Posterior vena cava (tissue), 2 donors: ENCODE measurements at regions of chr16 and their contacts with region 1.

Region 1: DNA sequence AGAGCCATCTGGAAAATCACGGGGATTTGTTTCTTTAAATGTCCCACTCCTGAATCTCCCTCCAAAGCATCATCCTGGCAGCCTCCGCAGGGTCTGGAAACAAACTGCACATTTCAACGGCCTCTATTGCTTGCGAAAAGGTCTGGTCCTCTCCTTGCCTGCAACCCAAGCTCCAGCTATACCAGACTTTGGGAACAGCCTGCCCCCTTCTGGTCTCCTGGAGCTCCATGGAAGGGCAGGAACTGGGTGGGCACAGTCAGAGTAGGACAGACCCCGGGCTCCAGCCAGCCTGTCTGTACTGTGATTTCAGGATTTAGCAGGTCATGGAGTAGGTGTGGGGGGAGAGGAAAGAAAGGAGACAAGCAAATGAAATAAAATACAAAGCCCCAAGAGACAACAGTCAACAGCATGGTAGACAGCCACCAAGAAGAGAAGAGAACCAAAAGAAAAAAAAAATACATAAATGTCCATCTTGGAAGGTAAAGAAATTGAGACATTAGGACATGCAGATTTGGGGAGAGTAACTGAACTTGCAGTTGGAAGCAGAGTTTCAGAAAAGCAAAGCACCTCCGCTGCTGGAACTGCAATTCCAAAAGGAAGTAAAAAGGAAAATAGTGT is 2.7 kb downstream of the XYLT1 start:
- DNase-seq: peak; percentile 87

Region 2: DNA sequence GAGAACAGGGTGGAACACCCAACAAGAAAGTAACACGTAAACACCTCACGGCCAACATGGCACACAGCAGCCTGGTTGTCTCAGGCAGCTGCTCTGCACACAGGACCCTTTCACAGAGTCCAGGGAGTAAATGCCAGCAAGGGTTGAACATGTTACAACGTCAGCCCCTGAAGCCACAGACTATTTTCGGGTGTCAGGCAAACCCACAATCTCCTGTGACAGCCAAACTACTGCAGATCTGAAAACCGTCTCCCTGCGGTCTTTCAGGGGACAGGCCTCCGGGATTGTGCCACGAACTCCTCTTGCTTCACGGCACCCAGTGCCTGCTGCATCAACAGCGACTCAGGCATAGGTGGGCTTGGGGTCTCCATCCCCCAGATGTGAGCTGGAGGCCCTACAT is 125.0 kb before region 1 on chr16:
- intact Hi-C with region 1: loop called in 1 of 2 experiments (anchors 10 kb)
- DNase-seq: no peak

Region 3: DNA sequence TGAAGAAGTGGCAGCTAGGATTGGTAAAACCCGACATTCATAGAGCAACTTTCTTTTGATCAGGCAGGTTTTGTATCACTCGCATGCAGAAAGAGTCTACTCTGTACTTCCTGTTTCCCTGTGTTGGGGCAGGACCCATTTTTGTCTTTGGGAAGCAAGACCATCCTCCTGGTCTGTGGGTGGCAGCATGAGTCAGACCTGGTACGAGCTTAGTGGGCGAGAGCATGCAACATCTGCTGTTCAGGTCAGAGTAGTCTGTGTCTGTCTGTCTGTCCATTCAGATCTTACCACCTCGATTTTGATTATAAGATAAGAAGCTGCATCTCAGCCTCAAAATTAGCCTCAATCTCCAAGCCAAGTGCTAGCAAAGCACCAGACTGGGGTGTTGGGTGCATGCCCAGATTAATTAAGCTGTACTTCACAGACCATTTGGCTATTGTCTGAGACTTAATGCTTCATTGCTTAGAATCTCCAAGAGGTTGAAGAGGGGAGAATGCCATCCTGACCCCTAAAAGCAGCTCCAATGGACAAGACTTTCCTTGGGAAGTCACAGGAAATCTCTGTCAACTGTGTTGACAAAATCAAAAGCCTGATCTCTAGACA is 108.1 kb before region 1 on chr16:
- intact Hi-C with region 1: loop called in 1 of 2 experiments (anchors 10 kb)
- DNase-seq: peak; percentile 80